A549 (cell line): ENCODE measurements at regions of chr9 and their contacts with region 1.

Region 1: GRCh38 chr9:94912700-94913249 is 186.3 kb downstream of the AOPEP start:
- DNase-seq: peak; percentile 73 to 93
- ATAC-seq: peak; percentile 28 to 47
- H3K4me3 ChIP-seq: no peak overlapping the region
- H3K27ac ChIP-seq: peak overlapping the region; percentile 97 to 99
- H3K4me1 ChIP-seq: peaks cover 96% of the 10 kb centered on the region
- CTCF ChIP-seq: no peak
- EP300 ChIP-seq: peak; percentile 72 to 92; a peak in 3 of 5 replicates
- POLR2A ChIP-seq: no peak
- RAD21 ChIP-seq: peak; percentile 42 to 58; a peak in 4 of 5 replicates

Region 2: GRCh38 chr9:94805585-94805984 is 107.2 kb before region 1 on chr9:
- CTCF ChIA-PET with region 1: interaction called, 5 read pairs
- POLR2A ChIA-PET with region 1: interaction called, 20 read pairs
- DNase-seq: peak; percentile 82 to 99
- ATAC-seq: peak; percentile 87 to 94
- H3K4me3 ChIP-seq: no peak overlapping the region; the same call in 2 of the 3 replicates
- H3K27ac ChIP-seq: peak overlapping the region; percentile 92
- H3K4me1 ChIP-seq: peaks cover 90% of the 10 kb centered on the region
- CTCF ChIP-seq: no peak
- EP300 ChIP-seq: peak; percentile 95
- POLR2A ChIP-seq: no peak
- RAD21 ChIP-seq: peak; percentile 39 to 65

Region 3: DNA sequence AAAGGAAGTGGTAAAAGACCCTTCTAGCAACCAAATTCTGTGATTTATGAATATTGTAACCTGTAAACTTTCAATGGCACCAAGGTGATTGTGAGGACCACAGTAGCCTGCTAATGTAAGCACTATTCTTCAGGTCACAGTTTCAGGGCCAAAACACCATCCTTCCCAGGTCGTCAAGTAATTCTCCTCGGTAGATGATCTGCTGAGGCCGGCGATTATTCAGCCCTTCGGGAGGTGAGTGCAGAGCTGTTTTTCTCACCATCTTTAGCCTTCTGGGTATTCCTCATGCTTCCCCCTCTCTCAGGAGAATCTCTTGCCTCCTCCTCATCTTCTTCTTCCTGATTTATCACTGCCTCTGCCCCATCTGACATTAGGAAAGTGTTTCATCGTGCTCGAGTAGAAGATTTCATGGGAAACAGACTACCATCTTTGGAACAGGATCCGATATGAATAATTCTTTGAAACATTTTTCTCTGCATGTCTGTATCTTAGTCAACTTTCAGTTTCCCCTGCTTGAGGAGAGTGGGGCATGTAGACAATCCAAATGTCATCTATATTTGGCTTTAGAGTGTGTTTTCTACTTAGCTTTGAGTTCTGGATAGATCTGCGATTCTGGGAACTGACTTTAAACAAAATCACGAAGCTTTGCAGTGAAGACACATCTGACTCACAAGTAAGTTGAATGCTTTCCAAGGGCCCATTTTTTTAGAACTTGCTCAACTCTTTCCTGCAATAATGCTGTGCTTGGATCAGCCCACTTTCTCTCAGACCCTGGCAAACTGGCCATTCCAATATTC is 12.4 kb before region 1 on chr9:
- CTCF ChIA-PET with region 1: interaction called, 10 read pairs
- POLR2A ChIA-PET with region 1: interaction called, 14 read pairs
- DNase-seq: peak in 1 of 2 experiments; percentile 83
- ATAC-seq: peak; percentile 73 to 81
- H3K4me3 ChIP-seq: peak overlapping the region; percentile 24
- H3K27ac ChIP-seq: peak overlapping the region; percentile 97 to 99
- H3K4me1 ChIP-seq: peaks cover 90% of the 10 kb centered on the region
- CTCF ChIP-seq: no peak
- EP300 ChIP-seq: peak; percentile 56 to 78; a peak in 1 of 5 replicates
- POLR2A ChIP-seq: no peak
- RAD21 ChIP-seq: no peak; a peak in 1 of 5 replicates

Region 4: DNA sequence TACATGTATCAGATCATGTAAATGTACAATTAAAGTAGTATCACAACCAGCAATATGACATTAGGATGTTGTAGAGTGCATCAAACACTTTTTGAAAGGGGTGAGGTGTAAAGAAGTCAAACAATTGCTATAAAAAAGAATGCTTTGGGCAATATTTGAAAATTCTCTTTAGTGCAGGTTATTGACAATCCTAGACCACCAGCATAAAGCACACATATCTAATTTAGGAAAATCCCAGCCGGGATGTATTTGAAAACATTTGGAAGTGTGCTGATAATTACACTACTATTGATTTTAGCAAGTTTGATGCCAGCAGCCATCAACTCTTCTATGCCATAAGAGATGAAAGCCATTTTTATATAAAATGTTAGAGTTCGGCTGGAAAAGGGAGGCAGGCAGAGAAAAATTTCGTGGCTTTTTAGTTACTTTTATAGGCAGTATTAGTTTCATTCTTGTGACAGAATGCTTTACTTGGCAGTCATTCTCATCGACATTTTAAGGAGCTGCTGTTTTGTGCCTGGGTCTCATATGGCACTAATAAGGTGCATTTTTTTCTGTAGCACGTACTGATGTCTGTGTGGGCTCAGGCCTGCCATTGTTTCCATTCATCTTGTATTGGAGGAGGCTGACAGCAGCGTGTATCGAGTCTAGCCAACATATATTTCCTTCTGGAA is 99.4 kb after region 1 on chr9:
- CTCF ChIA-PET with region 1: interaction called, 7 read pairs
- POLR2A ChIA-PET with region 1: interaction called, 93 read pairs
- DNase-seq: no peak
- ATAC-seq: no peak
- H3K4me3 ChIP-seq: peak overlapping the region; percentile 2; the same call in 1 of the 3 replicates
- H3K27ac ChIP-seq: peak overlapping the region; percentile 80 to 99
- H3K4me1 ChIP-seq: peaks cover 87% of the 10 kb centered on the region
- CTCF ChIP-seq: no peak
- EP300 ChIP-seq: no peak
- POLR2A ChIP-seq: no peak
- RAD21 ChIP-seq: no peak